ENCODE measurements at regions of chrX and their contacts with region 1.

Region 1: DNA sequence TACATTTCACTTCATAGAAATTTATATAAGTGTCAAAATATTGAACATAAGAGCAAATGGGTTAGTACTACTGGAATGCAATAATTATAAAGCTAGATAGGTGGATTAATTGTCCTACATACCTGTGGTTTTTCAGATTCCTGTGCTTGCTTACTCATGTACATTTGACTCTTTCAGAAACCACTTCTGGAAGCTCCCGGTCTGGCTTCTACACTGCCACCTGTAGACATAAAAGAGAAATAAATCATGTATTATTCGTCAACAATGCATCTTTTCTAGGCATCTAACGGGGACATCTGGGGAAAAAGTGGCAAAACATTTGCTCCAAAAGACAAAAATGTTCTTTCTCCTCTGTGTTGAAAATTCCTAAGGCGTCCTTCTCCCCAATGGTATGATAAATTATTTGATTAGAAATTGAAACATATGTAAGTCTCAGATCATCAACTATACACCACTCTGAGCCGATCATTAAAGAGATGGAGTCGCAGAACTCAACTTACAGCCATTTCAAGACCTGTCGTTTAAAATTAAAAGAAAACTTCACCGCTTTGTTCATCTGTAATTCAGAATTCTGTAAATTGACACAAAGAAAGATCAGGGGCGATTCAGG is 648.7 kb upstream of the DIPK2B start:
- DNase-seq: peak; percentile 40
- H3K4me3 Mint-ChIP-seq: peak overlapping the region; percentile 95
- H3K27ac Mint-ChIP-seq: peak overlapping the region; percentile 99
- H3K4me1 Mint-ChIP-seq: peaks cover 39% of the 10 kb centered on the region
- H3K27me3 Mint-ChIP-seq: no peaks in the 10 kb centered on the region

Region 2: DNA sequence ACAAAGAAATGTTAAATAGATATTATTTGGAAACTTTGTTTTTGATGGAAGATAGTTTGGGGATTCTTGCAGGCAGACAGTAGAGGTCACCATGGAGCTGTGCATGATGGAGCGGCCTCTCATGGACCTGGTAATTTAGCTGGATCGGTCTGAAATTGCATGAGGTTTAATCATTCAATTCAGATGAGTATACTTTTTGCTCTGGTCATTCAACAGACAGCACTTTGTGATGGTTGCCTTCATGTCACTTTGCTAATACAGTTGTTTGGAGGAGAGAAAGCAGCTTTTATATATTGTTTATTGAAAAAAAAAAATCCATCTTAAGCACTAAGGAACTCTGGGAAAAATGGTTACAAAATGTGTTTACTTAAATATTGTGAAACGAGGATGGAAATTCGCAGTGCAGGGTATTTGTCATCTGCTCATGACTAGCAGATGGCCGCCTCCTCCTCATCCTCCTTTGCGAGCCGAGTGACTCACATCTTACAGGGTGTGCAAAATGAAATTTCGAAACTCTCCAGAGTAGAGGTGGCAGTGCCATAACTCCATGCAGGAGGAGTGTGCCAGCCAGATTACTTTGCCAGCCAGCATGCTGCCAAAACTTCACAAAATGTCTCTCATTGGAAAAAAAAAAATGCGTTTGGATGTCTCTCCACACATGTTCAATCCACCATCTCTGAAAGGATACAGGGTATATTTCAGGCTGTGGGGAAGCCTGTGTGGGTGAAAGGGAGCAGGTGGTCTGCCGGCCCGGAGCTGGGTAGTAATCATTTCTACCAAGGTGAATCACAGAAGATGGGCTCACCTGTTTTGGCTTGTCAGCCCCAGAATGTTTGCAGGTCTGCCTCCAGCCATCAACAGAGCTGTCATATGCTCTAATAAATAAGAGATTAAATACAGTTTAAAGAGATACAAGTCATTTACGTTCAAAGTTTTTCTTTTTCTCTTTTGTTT is 333.8 kb before region 1 on chrX:
- CTCF ChIA-PET with region 1: interaction called, 3 read pairs
- POLR2A ChIA-PET with region 1: no interaction called
- intact Hi-C with region 1: loop called (anchors 5 kb)
- DNase-seq: peak; percentile 53
- H3K4me3 Mint-ChIP-seq: no peak overlapping the region
- H3K27ac Mint-ChIP-seq: peak overlapping the region; percentile 49
- H3K4me1 Mint-ChIP-seq: peaks cover 17% of the 10 kb centered on the region
- H3K27me3 Mint-ChIP-seq: peaks cover 3% of the 10 kb centered on the region

Region 3: DNA sequence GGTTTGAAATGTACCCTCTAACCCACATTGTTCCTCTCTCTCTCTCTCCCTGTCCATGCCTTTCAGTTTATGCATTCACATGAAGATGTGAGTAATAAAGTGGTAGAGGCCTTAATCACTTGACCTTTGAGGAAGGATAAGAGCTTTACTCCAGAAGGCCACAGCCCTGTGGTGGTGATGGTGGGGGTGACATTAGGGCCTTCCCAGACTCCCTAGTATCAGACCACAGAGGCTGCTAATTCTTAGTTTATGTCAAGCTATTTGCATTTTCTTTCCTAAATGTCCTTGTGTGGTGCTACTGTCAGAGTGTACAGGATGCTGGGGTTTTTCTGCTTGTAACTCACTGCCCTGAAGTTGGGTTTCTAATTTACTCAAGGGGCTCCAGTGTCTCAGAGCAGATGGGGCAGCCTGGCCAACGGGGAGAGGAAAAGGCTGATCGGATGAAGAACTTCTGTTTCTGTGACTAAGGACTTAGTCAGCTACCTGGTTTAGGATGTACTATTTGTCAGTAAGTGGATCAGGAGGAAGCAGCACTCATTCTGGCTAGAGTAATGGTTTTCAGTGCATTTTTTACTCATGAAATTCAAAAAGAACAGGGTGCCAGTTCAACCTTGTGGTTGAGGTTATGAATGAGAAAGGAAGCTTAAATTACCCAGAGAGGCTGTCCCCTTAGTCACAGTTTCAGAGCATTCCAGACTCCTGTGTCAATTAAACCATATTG is 139.1 kb before region 1 on chrX:
- CTCF ChIA-PET with region 1: no interaction called
- POLR2A ChIA-PET with region 1: interaction called, 9 read pairs
- intact Hi-C with region 1: loop called (anchors 5 kb)
- DNase-seq: peak; percentile 79
- H3K4me3 Mint-ChIP-seq: peak overlapping the region; percentile 21
- H3K27ac Mint-ChIP-seq: peak overlapping the region; percentile 78
- H3K4me1 Mint-ChIP-seq: peaks cover 49% of the 10 kb centered on the region
- H3K27me3 Mint-ChIP-seq: no peaks in the 10 kb centered on the region

Region 4: DNA sequence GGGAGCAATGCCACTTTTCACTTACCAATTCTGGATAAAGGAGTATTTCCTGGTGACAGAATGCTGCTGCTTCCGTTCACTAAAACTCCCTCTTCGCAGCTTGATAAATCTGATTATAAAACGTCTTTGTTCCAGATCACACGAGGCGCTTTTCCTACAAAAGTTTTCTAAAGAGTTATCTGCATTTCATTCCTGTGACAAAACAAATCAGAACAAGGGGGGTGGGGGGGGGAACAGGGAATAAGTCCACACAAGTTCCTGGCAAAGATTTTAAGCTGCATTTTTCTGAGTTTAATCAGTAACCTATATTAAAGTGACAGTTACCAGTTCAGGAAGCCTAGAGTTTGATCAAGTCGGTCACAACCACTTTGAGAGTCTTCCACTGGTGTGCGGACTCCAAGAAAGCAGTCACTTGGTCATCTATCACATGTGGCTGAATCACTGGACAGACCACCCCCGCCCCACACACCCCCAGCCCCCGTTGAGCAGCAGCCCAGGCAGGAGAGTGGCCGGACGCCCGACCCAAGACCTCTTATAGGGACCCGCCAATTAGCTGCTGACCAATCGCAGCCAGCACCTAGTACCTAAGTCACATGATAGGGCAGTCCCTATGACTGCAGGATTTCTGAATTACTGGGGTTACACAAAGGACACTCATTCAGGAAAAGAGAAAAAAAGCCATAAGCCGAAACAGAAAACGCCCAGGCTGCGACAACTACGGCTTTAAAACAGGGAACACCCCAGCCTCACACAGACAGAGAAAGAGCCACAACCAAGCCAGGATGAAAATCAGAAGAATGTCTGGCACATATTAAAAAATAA is 79.4 kb before region 1 on chrX:
- CTCF ChIA-PET with region 1: interaction called, 3 read pairs
- POLR2A ChIA-PET with region 1: interaction called, 64 read pairs
- intact Hi-C with region 1: loop called (anchors 2 kb)
- DNase-seq: peak; percentile 63
- H3K4me3 Mint-ChIP-seq: peak overlapping the region; percentile 84
- H3K27ac Mint-ChIP-seq: peak overlapping the region; percentile 95
- H3K4me1 Mint-ChIP-seq: peaks cover 54% of the 10 kb centered on the region
- H3K27me3 Mint-ChIP-seq: no peaks in the 10 kb centered on the region

Region 5: GRCh38 chrX:45868425-45868824 is 19.1 kb after region 1 on chrX:
- CTCF ChIA-PET with region 1: interaction called, 3 read pairs
- POLR2A ChIA-PET with region 1: no interaction called
- intact Hi-C with region 1: loop called (anchors 1 kb)
- DNase-seq: no peak
- H3K4me3 Mint-ChIP-seq: no peak overlapping the region
- H3K27ac Mint-ChIP-seq: peak overlapping the region; percentile 9
- H3K4me1 Mint-ChIP-seq: peaks cover 15% of the 10 kb centered on the region
- H3K27me3 Mint-ChIP-seq: no peaks in the 10 kb centered on the region

Region 6: GRCh38 chrX:45972636-45973035 is 123.3 kb after region 1 on chrX:
- CTCF ChIA-PET with region 1: no interaction called
- POLR2A ChIA-PET with region 1: no interaction called
- intact Hi-C with region 1: no loop called
- DNase-seq: no peak
- H3K4me3 Mint-ChIP-seq: no peak overlapping the region
- H3K27ac Mint-ChIP-seq: no peak overlapping the region
- H3K4me1 Mint-ChIP-seq: no peaks in the 10 kb centered on the region
- H3K27me3 Mint-ChIP-seq: no peaks in the 10 kb centered on the region

Region 7: DNA sequence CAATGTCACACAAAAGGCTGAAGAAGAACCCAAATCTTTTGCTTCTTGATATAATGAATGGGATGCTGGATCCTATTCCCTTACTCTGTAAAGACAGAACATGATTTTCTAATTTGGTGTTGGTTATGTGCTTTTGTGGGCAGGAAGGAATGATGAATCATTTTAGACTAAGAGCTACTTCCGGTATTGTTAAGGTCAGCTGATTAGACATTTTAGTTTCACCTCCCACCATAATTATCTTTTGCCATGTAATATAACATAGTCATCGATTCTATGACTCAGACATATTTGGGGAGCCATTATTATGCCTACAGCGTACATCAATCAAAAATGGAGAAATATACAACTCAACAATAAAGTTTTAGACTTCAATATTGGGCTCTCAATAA is 430.6 kb after region 1 on chrX:
- CTCF ChIA-PET with region 1: no interaction called
- POLR2A ChIA-PET with region 1: no interaction called
- intact Hi-C with region 1: loop called (anchors 2 kb)
- DNase-seq: no peak
- H3K4me3 Mint-ChIP-seq: no peak overlapping the region
- H3K27ac Mint-ChIP-seq: peak overlapping the region; percentile 23
- H3K4me1 Mint-ChIP-seq: peaks cover 24% of the 10 kb centered on the region
- H3K27me3 Mint-ChIP-seq: no peaks in the 10 kb centered on the region

Region 8: GRCh38 chrX:46376246-46376885 is 527.0 kb after region 1 on chrX:
- CTCF ChIA-PET with region 1: interaction called, 3 read pairs
- POLR2A ChIA-PET with region 1: no interaction called
- intact Hi-C with region 1: loop called (anchors 5 kb)
- DNase-seq: peak; percentile 47
- H3K4me3 Mint-ChIP-seq: no peak overlapping the region
- H3K27ac Mint-ChIP-seq: no peak overlapping the region
- H3K4me1 Mint-ChIP-seq: peaks cover 13% of the 10 kb centered on the region
- H3K27me3 Mint-ChIP-seq: no peaks in the 10 kb centered on the region

Region 9: DNA sequence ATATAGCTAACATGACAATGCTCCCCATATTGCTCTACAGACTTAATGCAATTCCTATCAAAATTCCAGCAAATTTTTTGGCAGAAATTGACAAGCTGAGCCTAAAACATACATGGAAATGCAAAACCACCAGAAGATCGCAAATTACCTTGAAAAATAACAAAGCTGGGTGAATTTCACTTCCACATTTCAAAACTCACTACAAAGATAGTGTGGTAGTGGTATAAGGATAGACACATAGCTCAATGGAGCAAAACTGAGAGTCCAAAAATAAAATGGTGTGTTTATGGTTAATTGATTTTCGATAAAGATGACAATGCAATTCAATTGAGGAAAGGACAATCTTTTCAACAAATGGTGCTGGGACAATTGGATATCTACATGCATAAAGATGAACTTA is 843.8 kb after region 1 on chrX:
- CTCF ChIA-PET with region 1: no interaction called
- POLR2A ChIA-PET with region 1: no interaction called
- intact Hi-C with region 1: no loop called
- DNase-seq: no peak
- H3K4me3 Mint-ChIP-seq: no peak overlapping the region
- H3K27ac Mint-ChIP-seq: no peak overlapping the region
- H3K4me1 Mint-ChIP-seq: no peaks in the 10 kb centered on the region
- H3K27me3 Mint-ChIP-seq: no peaks in the 10 kb centered on the region

Region 10: DNA sequence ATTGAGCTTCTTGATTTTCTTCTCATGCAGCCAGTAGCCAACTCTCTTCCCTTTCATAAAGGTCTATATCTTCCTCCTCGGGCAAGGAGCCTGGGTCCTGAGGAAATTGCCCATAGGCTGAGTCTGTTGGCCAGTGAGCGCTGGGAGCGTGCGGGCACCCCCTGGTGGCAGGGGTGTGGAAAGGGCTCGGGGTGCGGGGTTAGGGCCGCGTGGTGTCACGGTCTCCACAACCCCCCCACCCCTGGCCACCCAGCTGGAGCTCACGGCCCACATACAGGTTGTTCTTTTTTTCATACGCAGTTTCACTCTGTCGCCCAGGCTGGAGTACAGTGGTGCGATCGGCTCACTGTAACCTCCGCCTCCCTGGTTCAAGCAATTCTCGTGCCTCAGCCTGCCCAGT is 1308.8 kb after region 1 on chrX:
- CTCF ChIA-PET with region 1: no interaction called
- POLR2A ChIA-PET with region 1: no interaction called
- intact Hi-C with region 1: no loop called
- DNase-seq: no peak
- H3K4me3 Mint-ChIP-seq: no peak overlapping the region
- H3K27ac Mint-ChIP-seq: no peak overlapping the region
- H3K4me1 Mint-ChIP-seq: peaks cover 5% of the 10 kb centered on the region
- H3K27me3 Mint-ChIP-seq: no peaks in the 10 kb centered on the region

Measured in activated CD4-positive, alpha-beta memory T cell treated with anti-CD3 and anti-CD28 coated beads for 36 hours (primary cell).